ENCODE measurements at regions of chr13 and their contacts with region 1.

Region 1: DNA sequence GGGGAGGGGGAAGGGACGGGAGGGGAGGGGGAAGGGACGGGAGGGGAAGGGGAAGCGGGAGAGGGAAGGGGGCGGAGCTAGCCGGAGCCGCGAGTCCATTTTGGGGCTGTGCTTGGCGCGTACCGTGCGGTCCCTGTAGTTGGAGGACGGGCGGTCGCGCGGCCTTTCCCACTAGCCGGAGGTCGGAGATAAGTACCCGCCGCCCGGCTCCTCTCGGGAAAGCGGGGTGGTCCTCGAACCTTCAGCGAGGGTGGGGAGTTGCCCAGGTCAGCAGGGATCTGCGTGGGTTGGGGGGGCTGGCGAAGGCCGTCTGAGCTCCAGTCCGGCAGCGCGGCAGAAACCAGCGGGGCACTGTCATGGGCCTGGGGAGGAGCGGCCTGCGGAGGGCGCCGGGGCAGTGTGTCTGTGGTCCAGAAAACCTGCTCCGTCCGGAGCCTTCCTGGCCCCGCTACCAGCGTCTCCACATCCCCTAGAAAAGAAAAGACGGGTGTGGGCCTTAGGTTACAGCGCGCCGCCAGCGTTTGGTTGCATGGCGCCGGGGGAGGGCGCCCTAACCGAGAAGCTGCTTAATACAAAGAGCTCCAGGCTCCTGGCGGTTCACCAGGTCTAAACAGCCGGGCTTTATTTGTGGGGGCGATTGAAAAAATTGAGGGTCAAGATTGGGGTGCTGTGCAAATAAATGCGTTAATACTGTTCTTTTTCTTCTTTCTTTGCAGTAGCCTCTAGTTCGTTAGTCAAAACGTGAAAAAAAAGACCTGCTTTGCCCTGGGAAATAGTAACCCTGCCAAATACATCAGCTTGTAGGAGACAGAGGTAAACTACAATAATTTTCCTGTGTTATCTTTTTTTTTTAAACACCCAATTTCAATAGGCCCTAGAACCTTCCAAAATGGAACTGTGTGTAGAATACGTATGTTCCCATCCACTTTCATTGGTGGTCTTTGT is at the start of gene TRIM13:
- DNase-seq: peak; percentile 88 to 95
- ATAC-seq: peak; percentile 84 to 88 (median 86)
- H3K4me3 ChIP-seq: peak within 1 kb of the TSS; percentile 86
- H3K27ac ChIP-seq: peak within 1 kb of the TSS; percentile 98
- H3K4me1 ChIP-seq: peaks cover 46% of the 10 kb centered on the region
- H3K27me3 ChIP-seq: no peaks in the 10 kb centered on the region
- CTCF ChIP-seq: peak; percentile 73
- total RNA-seq, gene TRIM13: 14.8 to 25.9 (median 23.0) TPM

Region 2: DNA sequence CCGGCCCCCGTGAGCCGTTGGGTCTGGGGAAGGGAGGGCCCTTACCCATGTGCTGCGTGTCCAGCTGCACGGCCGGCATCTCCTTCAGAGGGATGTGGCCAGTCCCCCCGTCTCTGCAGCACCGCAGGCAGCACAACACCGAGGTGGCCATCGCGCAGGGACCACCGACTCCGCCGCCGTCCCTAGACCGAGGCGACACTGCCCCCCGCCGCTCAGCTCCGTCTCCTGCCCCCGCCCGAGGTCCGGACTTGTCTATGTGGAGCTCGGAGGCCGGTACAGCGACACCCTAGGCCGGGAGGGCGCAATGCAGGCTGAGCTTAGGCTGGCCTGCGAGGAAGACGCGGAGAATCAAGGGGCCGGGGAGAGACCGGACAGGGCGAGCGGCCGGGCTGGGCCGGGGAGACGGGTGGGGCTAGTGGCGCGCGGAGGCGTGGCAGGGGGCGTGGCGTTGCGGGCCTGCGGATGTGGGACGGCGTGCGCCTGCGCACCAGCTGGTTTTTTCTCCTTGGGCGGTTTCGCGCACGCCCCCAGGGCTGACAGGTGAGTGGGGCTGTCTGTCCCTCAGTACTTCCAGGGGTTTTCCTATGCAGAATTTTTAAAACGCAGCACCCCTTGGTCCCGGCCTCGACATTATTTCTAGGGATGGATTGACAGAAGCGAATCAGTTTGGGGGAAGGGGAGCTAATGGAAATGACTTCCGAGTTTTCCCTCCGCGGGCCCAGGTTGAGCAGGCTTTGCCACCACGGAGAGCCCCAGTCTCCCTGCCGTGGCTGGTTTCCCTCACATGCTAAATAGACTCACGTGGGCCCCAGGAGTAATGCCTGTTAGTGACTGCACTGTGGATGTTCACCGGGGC is 60.9 kb before region 1 on chr13 and contains the start of gene SPRYD7:
- intact Hi-C with region 1: loop called in 1 of 2 experiments (anchors 2 kb)
- DNase-seq: peak; percentile 98 to 99
- ATAC-seq: peak; percentile 97 to 99 (median 98)
- H3K4me3 ChIP-seq: peak within 1 kb of the TSS; percentile 90
- H3K27ac ChIP-seq: peak within 1 kb of the TSS; percentile 92
- H3K4me1 ChIP-seq: peaks cover 29% of the 10 kb centered on the region
- H3K27me3 ChIP-seq: no peaks in the 10 kb centered on the region
- CTCF ChIP-seq: peak; percentile 89
- total RNA-seq, gene SPRYD7: 12.3 to 23.8 (median 17.4) TPM

Region 3: DNA sequence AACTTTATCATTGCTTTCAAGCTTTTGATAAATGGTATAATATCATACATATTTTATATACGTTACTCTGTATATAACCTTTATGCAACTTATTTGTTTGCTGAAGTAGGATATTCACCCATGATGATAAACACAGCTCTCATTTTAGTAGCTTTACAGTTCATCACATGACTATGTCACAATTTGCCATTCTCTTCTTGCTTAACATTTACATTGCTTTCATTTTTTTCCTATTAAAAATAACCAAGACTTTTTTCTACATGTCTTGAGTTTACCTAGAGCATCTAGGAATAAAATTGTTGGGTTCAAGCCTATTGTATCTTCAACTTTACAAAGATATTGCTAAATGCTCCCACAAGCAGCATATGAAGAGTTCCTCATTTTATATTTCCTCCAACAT is 72.0 kb after region 1 on chr13:
- intact Hi-C with region 1: loop called in 1 of 2 experiments (anchors 5 kb)
- DNase-seq: no peak
- ATAC-seq: no peak
- H3K4me3 ChIP-seq: no peak overlapping the region
- H3K27ac ChIP-seq: no peak overlapping the region
- H3K4me1 ChIP-seq: peaks cover 11% of the 10 kb centered on the region
- H3K27me3 ChIP-seq: no peaks in the 10 kb centered on the region
- CTCF ChIP-seq: no peak

Region 4: DNA sequence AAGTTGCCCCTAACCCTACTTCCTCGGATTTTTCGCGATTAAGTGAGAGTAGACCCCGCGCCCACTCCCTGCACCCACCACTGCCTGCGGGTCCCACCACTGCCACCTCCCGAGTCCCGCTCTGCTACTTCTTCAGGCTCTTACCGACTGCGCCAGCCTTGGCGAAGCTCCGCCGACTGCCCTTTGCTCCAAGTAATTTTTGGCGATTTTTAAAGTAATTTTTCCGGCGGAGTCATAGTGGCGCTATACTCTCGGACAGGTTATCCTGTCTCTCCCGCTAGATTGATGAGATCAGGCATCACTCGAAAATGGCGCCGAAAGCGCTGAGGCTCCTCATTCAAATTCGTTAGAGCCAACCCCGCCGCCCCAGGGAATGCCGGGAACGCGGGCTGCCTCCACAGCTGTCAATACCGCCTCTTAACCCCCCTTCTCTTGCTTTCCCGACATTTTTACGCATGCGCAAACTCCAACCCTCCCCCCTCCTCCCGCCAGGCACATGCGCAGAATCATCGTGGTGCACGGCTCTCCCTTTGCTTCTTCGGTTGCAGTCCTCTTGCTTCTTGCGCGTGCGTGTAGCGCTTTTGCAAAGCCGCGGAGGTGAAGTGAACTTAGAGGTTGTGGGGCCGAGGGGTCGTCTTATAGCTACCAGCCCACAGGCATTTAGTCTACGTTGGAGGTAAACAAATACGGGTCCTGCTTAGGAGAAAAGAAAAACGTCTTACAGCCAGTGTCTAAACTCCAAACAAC is 84.6 kb after region 1 on chr13:
- intact Hi-C with region 1: loop called (anchors 5 kb)
- DNase-seq: peak; percentile 98 to 99
- ATAC-seq: peak; percentile 93 to 96 (median 95)
- H3K4me3 ChIP-seq: peak overlapping the region; percentile 77
- H3K27ac ChIP-seq: peak overlapping the region; percentile 87
- H3K4me1 ChIP-seq: peaks cover 44% of the 10 kb centered on the region
- H3K27me3 ChIP-seq: no peaks in the 10 kb centered on the region
- CTCF ChIP-seq: no peak

Region 5: GRCh38 chr13:50123862-50124536 is 126.8 kb after region 1 on chr13:
- intact Hi-C with region 1: loop called (anchors 2 kb)
- DNase-seq: peak; percentile 87 to 94
- ATAC-seq: peak; percentile 83 to 91 (median 86)
- H3K4me3 ChIP-seq: peak overlapping the region; percentile 99
- H3K27ac ChIP-seq: peak overlapping the region; percentile 100
- H3K4me1 ChIP-seq: peaks cover 40% of the 10 kb centered on the region
- H3K27me3 ChIP-seq: no peaks in the 10 kb centered on the region
- CTCF ChIP-seq: no peak

Region 6: DNA sequence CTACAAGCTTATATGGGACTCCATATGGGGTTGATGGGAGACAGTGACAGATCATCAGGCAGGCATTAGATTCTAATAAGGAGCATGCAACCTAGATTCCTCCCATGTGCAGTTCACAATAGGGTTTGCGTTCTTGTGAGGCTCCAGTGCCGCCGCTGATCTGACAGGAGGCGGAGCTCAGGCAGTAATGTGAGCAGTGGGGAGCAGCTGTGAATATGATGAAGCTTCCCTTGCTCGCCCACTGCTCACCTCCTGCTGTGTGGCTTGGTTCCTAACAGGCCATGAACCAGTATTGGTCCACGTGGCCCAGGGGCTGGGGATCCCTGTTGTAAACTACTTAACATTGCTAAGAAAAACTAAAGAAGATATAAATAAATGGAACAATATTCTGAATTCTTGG is 396.4 kb after region 1 on chr13:
- intact Hi-C with region 1: loop called in 1 of 2 experiments (anchors 10 kb)
- DNase-seq: no peak
- ATAC-seq: peak; percentile 75 to 87 (median 79)
- H3K4me3 ChIP-seq: peak overlapping the region; percentile 51
- H3K27ac ChIP-seq: peak overlapping the region; percentile 76
- H3K4me1 ChIP-seq: peaks cover 15% of the 10 kb centered on the region
- H3K27me3 ChIP-seq: no peaks in the 10 kb centered on the region
- CTCF ChIP-seq: no peak

Region 7: GRCh38 chr13:50539791-50540530 is 542.7 kb after region 1 on chr13:
- intact Hi-C with region 1: loop called in 1 of 2 experiments (anchors 5 kb)
- DNase-seq: no peak
- ATAC-seq: no peak
- H3K4me3 ChIP-seq: no peak overlapping the region
- H3K27ac ChIP-seq: no peak overlapping the region
- H3K4me1 ChIP-seq: peaks cover 7% of the 10 kb centered on the region
- H3K27me3 ChIP-seq: no peaks in the 10 kb centered on the region
- CTCF ChIP-seq: no peak

Measured in psoas muscle (tissue), 8 donors.